ENCODE measurements at regions of chr1 and their contacts with region 1.

Region 1: DNA sequence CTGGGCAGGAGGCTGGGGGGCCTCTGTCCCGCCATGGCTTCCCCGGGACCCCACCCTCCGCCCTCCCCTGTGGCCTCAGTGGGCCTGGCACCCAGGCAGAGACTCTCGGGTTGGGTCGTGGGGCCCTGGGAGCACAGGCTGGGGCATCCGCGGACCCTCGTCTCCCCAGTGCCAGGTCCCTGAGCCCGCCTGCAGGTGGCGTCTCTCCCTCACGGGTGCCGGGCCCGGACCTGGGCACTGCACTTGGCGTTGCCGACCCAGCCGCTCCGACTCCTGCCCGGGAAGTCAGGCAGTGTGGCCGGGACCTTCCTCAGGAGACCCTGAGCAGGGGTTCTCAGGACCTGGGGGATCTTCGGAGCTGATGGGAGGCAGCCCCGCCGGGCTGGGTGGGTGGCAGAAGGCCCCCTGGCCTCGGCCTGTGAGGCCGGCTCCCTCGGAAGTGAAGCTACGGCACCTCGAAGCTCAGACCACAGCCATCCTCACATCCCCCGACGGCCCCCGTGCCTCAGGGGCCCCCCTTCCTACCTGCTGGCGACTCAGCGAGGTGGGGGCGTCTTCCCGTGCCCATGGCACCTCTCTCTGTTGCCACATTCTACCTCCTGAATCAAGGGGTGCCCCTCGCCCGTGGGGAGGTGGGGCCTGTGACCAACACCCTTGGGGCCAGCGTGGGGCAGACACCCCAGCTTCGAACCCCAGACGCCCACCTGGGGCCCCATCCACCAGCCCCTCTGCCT is 6.4 kb upstream of the C1orf159 start:
- DNase-seq: peak; percentile 73
- H3K4me3 Mint-ChIP-seq: no peak overlapping the region
- H3K27ac Mint-ChIP-seq: no peak overlapping the region
- H3K4me1 Mint-ChIP-seq: no peaks in the 10 kb centered on the region
- H3K27me3 Mint-ChIP-seq: no peaks in the 10 kb centered on the region
- CTCF ChIP-seq: peak; percentile 92

Region 2: DNA sequence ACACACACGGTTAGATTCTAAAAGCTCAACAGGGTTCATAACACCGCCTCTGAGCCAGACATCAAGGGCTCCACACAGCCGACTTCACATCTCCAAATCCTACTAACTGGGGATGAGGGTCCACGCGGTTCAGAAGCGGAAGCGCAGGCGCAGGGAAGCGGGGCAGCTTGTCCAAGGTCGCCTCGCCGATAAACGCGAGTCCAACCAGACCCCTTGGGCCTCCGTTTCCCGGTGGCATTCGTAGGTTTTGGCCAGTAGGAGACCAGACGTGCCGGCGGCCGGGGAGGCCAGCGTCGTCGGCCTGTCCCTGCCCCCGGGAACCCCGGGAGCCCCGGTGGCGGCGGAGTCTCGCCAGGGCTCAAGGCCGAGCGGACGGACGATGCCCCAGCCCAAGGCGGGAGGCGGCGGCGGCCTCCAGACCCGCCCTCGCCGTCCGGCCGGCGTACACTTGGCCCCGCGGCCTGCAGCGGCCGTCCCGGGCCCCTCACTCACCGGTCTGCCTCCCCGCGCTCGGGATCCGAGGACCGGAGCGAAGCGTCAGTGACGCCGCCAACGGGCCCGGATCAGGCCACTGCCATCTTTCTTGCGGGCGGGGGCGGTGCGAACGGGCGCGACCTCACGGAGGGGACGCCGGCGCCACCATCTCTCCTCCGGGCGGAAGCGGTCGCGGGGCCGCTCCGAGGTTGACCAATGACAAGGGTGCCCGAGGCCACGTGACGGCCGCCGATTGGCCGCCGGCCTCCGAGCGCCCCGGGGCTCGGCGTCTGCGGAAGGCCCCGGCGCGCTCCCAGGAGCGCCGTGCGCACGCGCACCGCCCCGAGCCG is 109.4 kb after region 1 on chr1 and contains the start of gene SDF4:
- CTCF ChIA-PET with region 1: interaction called, 8 read pairs
- POLR2A ChIA-PET with region 1: interaction called, 7 read pairs
- intact Hi-C with region 1: loop called (anchors 2 kb)
- DNase-seq: peak; percentile 95
- H3K4me3 Mint-ChIP-seq: peak within 1 kb of the TSS; percentile 88
- H3K27ac Mint-ChIP-seq: peak within 1 kb of the TSS; percentile 85
- H3K4me1 Mint-ChIP-seq: peaks cover 8% of the 10 kb centered on the region
- H3K27me3 Mint-ChIP-seq: no peaks in the 10 kb centered on the region
- CTCF ChIP-seq: no peak
- total RNA-seq, gene SDF4: 122 and 127 TPM in 2 replicates

Measured in MCF 10A (cell line).